ENCODE measurements at regions of chr17 and their contacts with region 1.

Region 1: GRCh38 chr17:4412933-4413831 is 20.6 kb upstream of the SPNS3 start:
- DNase-seq: peak; percentile 85
- H3K4me3 ChIP-seq: peak overlapping the region in 1 of 2 experiments; percentile 51; a peak in 1 of 4 replicates
- H3K27ac ChIP-seq: no peak overlapping the region
- H3K4me1 ChIP-seq: no peaks in the 10 kb centered on the region; a peak in 1 of 4 replicates
- H3K27me3 ChIP-seq: no peaks in the 10 kb centered on the region
- CTCF ChIP-seq: peak; percentile 89
- EP300 ChIP-seq: no peak
- RAD21 ChIP-seq: peak; percentile 97

Region 2: GRCh38 chr17:4199818-4200402 is 213.3 kb before region 1 on chr17:
- CTCF ChIA-PET with region 1: interaction called, 17 read pairs
- POLR2A ChIA-PET with region 1: no interaction called
- DNase-seq: peak; percentile 77
- H3K4me3 ChIP-seq: no peak overlapping the region
- H3K27ac ChIP-seq: no peak overlapping the region
- H3K4me1 ChIP-seq: peaks cover 0 to 6% of the 10 kb centered on the region in 2 experiments; a peak in 1 of 4 replicates
- H3K27me3 ChIP-seq: no peaks in the 10 kb centered on the region
- CTCF ChIP-seq: peak; percentile 83
- EP300 ChIP-seq: no peak
- RAD21 ChIP-seq: peak; percentile 56

Region 3: DNA sequence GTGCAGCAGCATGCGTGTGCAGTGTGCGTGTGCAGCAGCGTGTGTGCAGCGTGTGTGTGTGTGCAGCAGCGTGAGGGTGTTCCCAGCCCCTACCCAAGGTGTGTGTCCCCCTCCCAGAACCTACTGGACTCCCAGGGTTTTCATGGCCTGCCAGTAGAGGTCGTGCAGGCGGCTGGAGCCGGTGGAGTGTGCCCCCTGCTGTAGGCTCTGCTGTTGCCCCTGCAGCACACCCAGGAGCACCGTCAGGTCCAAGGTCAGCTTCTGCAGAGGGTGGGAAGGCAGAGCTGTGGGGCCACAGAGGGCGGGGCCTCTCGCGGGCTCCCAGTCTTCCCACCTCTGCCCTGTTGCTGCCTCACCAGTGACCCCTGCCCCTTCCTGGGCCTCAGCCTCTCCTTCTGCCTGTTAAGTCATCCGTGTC is 127.1 kb after region 1 on chr17:
- CTCF ChIA-PET with region 1: no interaction called
- POLR2A ChIA-PET with region 1: no interaction called
- DNase-seq: no peak
- H3K4me3 ChIP-seq: no peak overlapping the region
- H3K27ac ChIP-seq: no peak overlapping the region
- H3K4me1 ChIP-seq: peaks cover 0 to 9% of the 10 kb centered on the region in 2 experiments; a peak in 1 of 4 replicates
- H3K27me3 ChIP-seq: no peaks in the 10 kb centered on the region
- CTCF ChIP-seq: no peak
- EP300 ChIP-seq: no peak
- RAD21 ChIP-seq: no peak

Region 4: GRCh38 chr17:4908301-4908700 is 495.1 kb after region 1 on chr17:
- CTCF ChIA-PET with region 1: no interaction called
- POLR2A ChIA-PET with region 1: no interaction called
- DNase-seq: peak; percentile 45
- H3K4me3 ChIP-seq: no peak overlapping the region
- H3K27ac ChIP-seq: peak overlapping the region in 1 of 2 experiments; percentile 1; a peak in 1 of 4 replicates
- H3K4me1 ChIP-seq: peaks cover 0 to 13% of the 10 kb centered on the region in 2 experiments; a peak in 1 of 4 replicates
- H3K27me3 ChIP-seq: no peaks in the 10 kb centered on the region
- CTCF ChIP-seq: no peak
- EP300 ChIP-seq: no peak
- RAD21 ChIP-seq: no peak